HepG2 (cell line): ENCODE measurements at regions of chr5 and their contacts with region 1.

Region 1: DNA sequence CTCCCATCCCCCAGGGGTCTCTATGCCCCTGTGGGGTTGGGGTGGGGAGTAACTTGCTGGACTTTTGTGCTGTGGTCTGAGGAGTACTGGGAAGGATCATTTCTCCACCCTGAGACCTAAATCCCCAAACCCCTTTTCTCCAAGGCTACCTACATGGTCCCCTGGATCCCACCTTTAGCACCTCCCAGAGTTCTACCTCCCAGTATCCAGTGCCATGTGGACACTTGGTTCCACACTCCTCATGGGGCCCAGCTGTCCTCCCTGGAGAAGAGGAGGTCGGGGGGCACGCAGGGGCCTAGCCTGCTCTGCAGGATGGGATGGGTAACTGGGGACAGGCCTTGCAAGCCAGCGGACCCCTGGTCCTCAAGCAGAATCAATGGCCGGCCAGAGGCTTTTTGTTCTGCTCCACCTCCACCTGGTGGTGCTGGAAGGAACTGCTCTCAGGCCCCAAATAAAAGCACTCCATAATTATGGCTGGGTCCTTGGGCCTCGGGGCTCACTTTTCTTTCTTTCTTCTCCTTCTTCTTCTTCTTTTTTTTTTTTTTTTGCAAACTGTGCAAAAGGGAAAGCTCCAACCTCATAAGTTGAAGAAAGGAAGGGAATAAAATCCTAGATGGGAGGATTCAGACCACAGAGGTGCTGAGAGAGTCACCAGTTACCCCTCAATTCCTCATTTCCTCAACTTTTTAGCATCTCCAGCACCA is 68.4 kb downstream of the PSD2 start:
- DNase-seq: peak; percentile 28
- ATAC-seq: peak; percentile 81
- H3K4me3 ChIP-seq: no peak overlapping the region
- H3K27ac ChIP-seq: no peak overlapping the region
- H3K4me1 ChIP-seq: no peaks in the 10 kb centered on the region
- H3K27me3 ChIP-seq: peaks cover 4 to 23% of the 10 kb centered on the region in 2 experiments; a peak in 3 of 5 replicates
- CTCF ChIP-seq: peak; percentile 79
- EP300 ChIP-seq: no peak
- POLR2A ChIP-seq: no peak
- RAD21 ChIP-seq: peak; percentile 58; the same call in 1 of the 2 replicates

Region 2: DNA sequence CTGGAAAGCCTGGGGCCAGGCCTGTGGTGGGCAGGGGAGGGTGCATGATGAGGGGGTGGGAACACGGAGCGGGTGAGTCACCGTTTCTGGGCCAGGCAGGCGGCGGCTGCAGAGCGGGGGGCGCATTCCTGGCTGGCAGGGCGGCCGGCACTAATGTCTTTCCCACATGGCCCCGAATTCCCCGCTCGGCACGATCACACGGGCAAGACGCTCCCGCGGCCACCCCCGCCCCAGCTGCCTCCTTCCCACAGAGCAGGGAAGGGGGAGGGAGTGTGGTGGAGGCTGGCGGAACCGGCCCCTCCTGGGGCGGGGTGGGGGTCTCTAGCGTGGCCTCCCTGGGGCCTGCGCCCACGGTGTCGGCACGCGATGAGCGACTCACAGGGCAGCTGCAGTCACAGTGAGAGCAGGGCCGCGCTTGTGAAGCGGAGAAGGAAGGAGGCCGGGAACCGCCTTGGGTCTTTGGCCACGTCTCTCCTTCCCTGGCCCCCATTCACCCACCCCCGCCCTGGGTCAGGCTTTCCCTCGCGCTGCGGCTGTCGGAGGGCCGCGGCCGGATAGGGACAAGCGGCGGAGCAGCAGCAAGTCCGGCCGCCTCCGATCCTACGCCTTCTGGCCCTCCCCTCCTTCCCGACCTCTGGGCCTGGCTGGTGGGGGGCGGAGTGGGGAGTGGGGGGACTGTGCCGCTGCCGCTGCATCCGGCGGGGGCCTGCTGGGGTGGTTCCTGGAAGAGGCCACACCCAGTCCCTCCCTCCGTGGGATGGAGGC is 166.9 kb before region 1 on chr5:
- CTCF ChIA-PET with region 1: no interaction called
- POLR2A ChIA-PET with region 1: no interaction called
- in situ Hi-C with region 1: no loop called
- intact Hi-C with region 1: no loop called
- DNase-seq: peak; percentile 70
- ATAC-seq: peak; percentile 51
- H3K4me3 ChIP-seq: peak overlapping the region; percentile 54 to 74 (median 66); a peak in 5 of 6 replicates
- H3K27ac ChIP-seq: peak overlapping the region; percentile 83
- H3K4me1 ChIP-seq: peaks cover 88% of the 10 kb centered on the region
- H3K27me3 ChIP-seq: no peaks in the 10 kb centered on the region
- CTCF ChIP-seq: no peak
- EP300 ChIP-seq: no peak
- POLR2A ChIP-seq: peak; percentile 36 to 59
- RAD21 ChIP-seq: 0 out of 2 replicates have a peak, but pooled peaks have one; percentile 9

Region 3: GRCh38 chr5:139968547-139969261 is 104.7 kb after region 1 on chr5:
- CTCF ChIA-PET with region 1: interaction called, 4 read pairs
- POLR2A ChIA-PET with region 1: no interaction called
- in situ Hi-C with region 1: no loop called
- intact Hi-C with region 1: loop called (anchors 10 kb)
- DNase-seq: peak; percentile 62
- ATAC-seq: peak; percentile 99
- H3K4me3 ChIP-seq: peak overlapping the region in 1 of 3 experiments; percentile 33; a peak in 1 of 6 replicates
- H3K27ac ChIP-seq: no peak overlapping the region
- H3K4me1 ChIP-seq: no peaks in the 10 kb centered on the region
- H3K27me3 ChIP-seq: peaks cover 2 to 17% of the 10 kb centered on the region in 2 experiments; a peak in 3 of 5 replicates
- CTCF ChIP-seq: peak; percentile 100
- EP300 ChIP-seq: 0 out of 4 replicates have a peak, but pooled peaks of 1 of the 2 experiments have one; percentile 5
- POLR2A ChIP-seq: no peak
- RAD21 ChIP-seq: peak; percentile 97